ENCODE measurements at regions of chr14 and their contacts with region 1.

Region 1: DNA sequence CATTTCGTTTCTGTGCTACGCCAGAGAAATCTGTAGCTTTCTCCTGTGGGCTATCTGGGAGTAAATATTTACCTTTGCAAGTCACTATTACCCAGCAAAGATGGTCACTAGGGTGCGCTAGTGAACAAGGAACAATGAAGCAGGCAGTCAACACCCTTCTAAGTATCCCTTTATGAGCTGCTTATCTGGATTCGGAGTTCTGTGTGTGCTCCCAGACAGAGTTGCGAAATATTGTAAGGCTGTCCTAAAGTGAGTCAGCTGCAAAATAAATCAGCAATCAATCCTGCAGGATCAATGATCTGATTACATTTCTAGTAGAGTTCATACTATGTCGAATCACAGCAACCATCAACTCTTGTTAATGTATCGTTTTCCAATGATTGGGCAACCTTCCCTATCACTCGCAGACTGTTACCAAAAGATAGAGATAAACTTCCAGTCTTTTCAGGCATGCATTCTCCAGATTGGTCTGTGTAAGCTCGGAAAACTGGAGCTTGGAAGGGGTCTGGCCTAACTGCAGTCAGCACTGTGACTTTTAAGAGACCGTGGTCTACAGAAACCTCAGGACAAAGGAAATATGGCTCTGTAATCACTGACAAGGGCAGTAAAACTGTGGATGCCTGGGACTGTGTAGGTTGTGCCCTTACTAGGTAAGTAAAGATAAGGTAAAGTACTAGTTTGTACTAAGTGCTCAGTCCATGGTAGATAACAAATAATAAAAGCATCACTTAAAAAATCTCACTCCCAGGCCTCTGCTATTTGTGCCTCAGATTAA is 133.5 kb downstream of the KCNK10 start:
- DNase-seq: peak; percentile 86
- H3K4me3 ChIP-seq: no peak overlapping the region
- H3K27ac ChIP-seq: no peak overlapping the region
- H3K4me1 ChIP-seq: no peaks in the 10 kb centered on the region
- H3K27me3 ChIP-seq: peaks cover 15% of the 10 kb centered on the region
- CTCF ChIP-seq: peak; percentile 82

Region 2: GRCh38 chr14:88209273-88209672 is 19.7 kb after region 1 on chr14:
- CTCF ChIA-PET with region 1: no interaction called
- POLR2A ChIA-PET with region 1: no interaction called
- intact Hi-C with region 1: loop called (anchors 1 kb)
- DNase-seq: no peak
- H3K4me3 ChIP-seq: no peak overlapping the region
- H3K27ac ChIP-seq: no peak overlapping the region
- H3K4me1 ChIP-seq: no peaks in the 10 kb centered on the region
- H3K27me3 ChIP-seq: no peaks in the 10 kb centered on the region
- CTCF ChIP-seq: no peak

Region 3: GRCh38 chr14:88233915-88234314 is 44.3 kb after region 1 on chr14:
- CTCF ChIA-PET with region 1: interaction called, 12 read pairs
- POLR2A ChIA-PET with region 1: no interaction called
- intact Hi-C with region 1: loop called (anchors 1 kb)
- DNase-seq: peak; percentile 38
- H3K4me3 ChIP-seq: no peak overlapping the region
- H3K27ac ChIP-seq: no peak overlapping the region
- H3K4me1 ChIP-seq: no peaks in the 10 kb centered on the region
- H3K27me3 ChIP-seq: peaks cover 6% of the 10 kb centered on the region
- CTCF ChIP-seq: peak; percentile 53

Region 4: GRCh38 chr14:88380405-88380804 is 190.8 kb after region 1 on chr14:
- CTCF ChIA-PET with region 1: interaction called, 15 read pairs
- POLR2A ChIA-PET with region 1: no interaction called
- intact Hi-C with region 1: loop called (anchors 2 kb)
- DNase-seq: peak; percentile 3
- H3K4me3 ChIP-seq: no peak overlapping the region
- H3K27ac ChIP-seq: no peak overlapping the region
- H3K4me1 ChIP-seq: peaks cover 6% of the 10 kb centered on the region
- H3K27me3 ChIP-seq: peaks cover 12% of the 10 kb centered on the region
- CTCF ChIP-seq: peak; percentile 42

Region 5: GRCh38 chr14:88437658-88438057 is 248.1 kb after region 1 on chr14:
- CTCF ChIA-PET with region 1: no interaction called
- POLR2A ChIA-PET with region 1: no interaction called
- intact Hi-C with region 1: loop called (anchors 5 kb)
- DNase-seq: no peak
- H3K4me3 ChIP-seq: no peak overlapping the region
- H3K27ac ChIP-seq: no peak overlapping the region
- H3K4me1 ChIP-seq: no peaks in the 10 kb centered on the region
- H3K27me3 ChIP-seq: no peaks in the 10 kb centered on the region
- CTCF ChIP-seq: peak; percentile 42; the same call in 1 of the 2 replicates

Region 6: DNA sequence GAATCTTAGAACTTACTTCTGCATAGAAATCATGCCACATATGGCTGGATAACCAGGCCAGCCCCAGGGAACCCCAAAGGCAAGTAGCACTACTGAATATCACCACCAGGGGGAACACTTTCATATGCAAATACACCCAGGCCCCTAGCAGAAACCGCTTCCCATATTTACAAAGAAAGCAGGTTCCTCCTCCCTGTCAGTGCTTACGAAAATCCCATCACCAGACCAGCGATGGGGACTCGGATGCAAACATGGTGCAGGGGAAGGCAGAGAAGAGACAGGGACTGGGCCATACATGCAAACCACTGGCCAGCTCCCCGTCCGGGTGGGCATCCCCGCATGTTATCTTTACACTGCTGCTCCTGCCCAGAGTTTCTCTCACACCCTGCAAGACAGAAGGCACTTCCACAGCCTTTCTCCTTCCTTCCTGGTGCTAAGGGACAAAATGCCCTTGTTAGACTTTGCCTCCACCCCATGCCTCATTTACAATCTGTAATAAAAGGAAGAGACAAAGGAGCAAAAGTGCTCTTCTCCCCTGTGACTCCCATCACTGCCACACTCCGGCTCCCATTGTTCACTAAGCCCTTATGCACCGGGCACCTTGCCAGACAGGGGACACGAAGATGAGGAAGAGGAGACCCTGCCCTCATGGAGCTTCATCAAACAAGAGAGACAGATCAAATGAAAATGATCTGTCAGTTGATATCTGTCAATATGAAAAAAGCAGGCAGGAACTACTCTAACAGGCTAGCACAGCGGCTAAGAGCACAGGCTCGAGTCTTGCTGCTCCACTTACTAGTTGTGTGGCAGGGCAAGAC is 302.9 kb after region 1 on chr14:
- CTCF ChIA-PET with region 1: no interaction called
- POLR2A ChIA-PET with region 1: no interaction called
- intact Hi-C with region 1: loop called (anchors 5 kb)
- DNase-seq: peak; percentile 82
- H3K4me3 ChIP-seq: no peak overlapping the region
- H3K27ac ChIP-seq: no peak overlapping the region
- H3K4me1 ChIP-seq: no peaks in the 10 kb centered on the region
- H3K27me3 ChIP-seq: no peaks in the 10 kb centered on the region
- CTCF ChIP-seq: peak; percentile 88

Region 7: DNA sequence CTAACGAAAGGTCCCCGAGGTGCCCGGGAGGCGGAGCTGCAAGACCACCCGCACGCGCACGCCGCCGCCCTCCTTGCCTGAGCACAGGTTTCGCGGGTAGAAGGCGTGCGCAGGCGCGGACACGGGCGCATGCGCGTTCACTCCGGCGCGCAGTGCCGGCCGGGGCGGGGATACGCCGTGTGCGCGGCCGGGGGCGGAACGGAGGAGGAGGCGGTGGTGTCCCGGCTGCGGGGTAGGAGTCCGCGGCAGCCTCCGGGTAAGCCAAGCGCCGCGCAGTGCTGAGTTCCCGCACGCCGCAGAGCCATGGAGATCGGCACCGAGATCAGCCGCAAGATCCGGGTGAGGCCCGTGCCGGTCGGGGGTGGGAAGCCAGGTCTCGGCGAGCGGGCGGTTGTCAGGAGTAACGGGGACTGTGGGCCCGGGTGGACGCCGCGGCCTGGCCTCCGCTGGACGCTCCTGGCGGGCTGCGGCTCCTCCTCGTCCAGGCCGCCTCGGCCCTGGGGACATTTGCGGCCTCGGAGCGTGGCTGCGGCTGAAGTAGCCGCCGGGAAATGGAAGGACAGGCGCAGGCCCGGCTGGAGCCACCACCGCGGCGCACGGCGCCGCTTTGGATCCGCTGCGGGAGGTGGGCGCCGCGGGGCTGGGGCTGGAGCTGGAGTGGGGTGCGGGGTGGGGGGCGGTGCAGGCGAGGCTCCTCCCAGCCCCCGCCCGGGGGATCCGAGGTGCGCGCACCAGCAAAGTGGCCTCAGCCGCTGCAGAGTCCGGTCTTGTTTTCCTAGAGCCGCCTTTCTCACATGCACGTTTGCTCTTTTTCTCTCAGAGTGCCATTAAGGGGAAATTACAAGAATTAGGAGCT is 373.5 kb after region 1 on chr14 and contains the start of gene ZC3H14:
- CTCF ChIA-PET with region 1: no interaction called
- POLR2A ChIA-PET with region 1: no interaction called
- intact Hi-C with region 1: loop called (anchors 2 kb)
- DNase-seq: peak; percentile 94
- H3K4me3 ChIP-seq: peak within 1 kb of the TSS; percentile 94
- H3K27ac ChIP-seq: peak within 1 kb of the TSS; percentile 95
- H3K4me1 ChIP-seq: peaks cover 4% of the 10 kb centered on the region
- H3K27me3 ChIP-seq: no peaks in the 10 kb centered on the region
- CTCF ChIP-seq: no peak
- total RNA-seq, gene ZC3H14: 91.0 and 93.2 TPM in 2 replicates

Region 8: GRCh38 chr14:88621100-88621499 is 431.5 kb after region 1 on chr14:
- CTCF ChIA-PET with region 1: no interaction called
- POLR2A ChIA-PET with region 1: no interaction called
- intact Hi-C with region 1: no loop called
- DNase-seq: no peak
- H3K4me3 ChIP-seq: no peak overlapping the region
- H3K27ac ChIP-seq: no peak overlapping the region
- H3K4me1 ChIP-seq: no peaks in the 10 kb centered on the region
- H3K27me3 ChIP-seq: no peaks in the 10 kb centered on the region
- CTCF ChIP-seq: no peak